ENCODE measurements at regions of chr2 and their contacts with region 1.

Region 1: GRCh38 chr2:64479259-64480117 is 25.5 kb downstream of the LGALSL start:
- DNase-seq: no peak
- H3K4me3 ChIP-seq: no peak overlapping the region
- H3K27ac ChIP-seq: no peak overlapping the region
- H3K4me1 ChIP-seq: peaks cover 16% of the 10 kb centered on the region
- H3K27me3 ChIP-seq: no peaks in the 10 kb centered on the region
- CTCF ChIP-seq: no peak

Region 2: GRCh38 chr2:64453770-64454385 is 25.6 kb before region 1 on chr2 and contains the start of gene LGALSL:
- CTCF ChIA-PET with region 1: no interaction called
- POLR2A ChIA-PET with region 1: interaction called, 11 read pairs
- intact Hi-C with region 1: no loop called
- DNase-seq: peak; percentile 71 to 88
- H3K4me3 ChIP-seq: peak within 1 kb of the TSS; percentile 65
- H3K27ac ChIP-seq: peak within 1 kb of the TSS; percentile 99
- H3K4me1 ChIP-seq: peaks cover 22% of the 10 kb centered on the region
- H3K27me3 ChIP-seq: no peaks in the 10 kb centered on the region
- CTCF ChIP-seq: no peak
- total RNA-seq, gene LGALSL: 9.7 and 13.0 TPM in 2 replicates

Region 3: GRCh38 chr2:64538764-64539433 is 59.4 kb after region 1 on chr2:
- CTCF ChIA-PET with region 1: no interaction called
- POLR2A ChIA-PET with region 1: no interaction called
- intact Hi-C with region 1: no loop called
- DNase-seq: no peak
- H3K4me3 ChIP-seq: no peak overlapping the region
- H3K27ac ChIP-seq: no peak overlapping the region
- H3K4me1 ChIP-seq: peaks cover 13% of the 10 kb centered on the region
- H3K27me3 ChIP-seq: no peaks in the 10 kb centered on the region
- CTCF ChIP-seq: no peak

Region 4: GRCh38 chr2:64617631-64618151 is 138.2 kb after region 1 on chr2:
- CTCF ChIA-PET with region 1: interaction called, 11 read pairs
- POLR2A ChIA-PET with region 1: no interaction called
- intact Hi-C with region 1: no loop called
- DNase-seq: no peak
- H3K4me3 ChIP-seq: no peak overlapping the region
- H3K27ac ChIP-seq: no peak overlapping the region
- H3K4me1 ChIP-seq: no peaks in the 10 kb centered on the region
- H3K27me3 ChIP-seq: no peaks in the 10 kb centered on the region
- CTCF ChIP-seq: no peak

Region 5: GRCh38 chr2:66317268-66317890 is 1837.9 kb after region 1 on chr2:
- CTCF ChIA-PET with region 1: no interaction called
- POLR2A ChIA-PET with region 1: no interaction called
- intact Hi-C with region 1: no loop called
- DNase-seq: no peak
- H3K4me3 ChIP-seq: no peak overlapping the region
- H3K27ac ChIP-seq: no peak overlapping the region
- H3K4me1 ChIP-seq: no peaks in the 10 kb centered on the region
- H3K27me3 ChIP-seq: no peaks in the 10 kb centered on the region
- CTCF ChIP-seq: no peak